CD4-positive, alpha-beta memory T cell (primary cell): ENCODE measurements at regions of chr15 and their contacts with region 1.

Region 1: GRCh38 chr15:44207643-44208042 is 12.6 kb upstream of the FRMD5 start:
- DNase-seq: no peak
- H3K4me3 ChIP-seq: no peak overlapping the region
- H3K4me3 Mint-ChIP-seq: no peak overlapping the region
- H3K27ac ChIP-seq: no peak overlapping the region
- H3K27ac Mint-ChIP-seq: no peak overlapping the region
- H3K4me1 ChIP-seq: no peaks in the 10 kb centered on the region
- H3K4me1 Mint-ChIP-seq: no peaks in the 10 kb centered on the region
- H3K27me3 ChIP-seq: peaks cover 4% of the 10 kb centered on the region
- H3K27me3 Mint-ChIP-seq: peaks cover 9 to 15% of the 10 kb centered on the region in 2 donors

Region 2: GRCh38 chr15:44144184-44144583 is 63.5 kb before region 1 on chr15:
- CTCF ChIA-PET with region 1: no interaction called
- POLR2A ChIA-PET with region 1: no interaction called
- intact Hi-C with region 1: loop called (anchors 10 kb)
- DNase-seq: no peak
- H3K4me3 ChIP-seq: no peak overlapping the region
- H3K4me3 Mint-ChIP-seq: no peak overlapping the region
- H3K27ac ChIP-seq: no peak overlapping the region
- H3K27ac Mint-ChIP-seq: no peak overlapping the region
- H3K4me1 ChIP-seq: no peaks in the 10 kb centered on the region
- H3K4me1 Mint-ChIP-seq: no peaks in the 10 kb centered on the region
- H3K27me3 ChIP-seq: no peaks in the 10 kb centered on the region
- H3K27me3 Mint-ChIP-seq: peaks cover 4 to 5% of the 10 kb centered on the region in 2 donors

Region 3: DNA sequence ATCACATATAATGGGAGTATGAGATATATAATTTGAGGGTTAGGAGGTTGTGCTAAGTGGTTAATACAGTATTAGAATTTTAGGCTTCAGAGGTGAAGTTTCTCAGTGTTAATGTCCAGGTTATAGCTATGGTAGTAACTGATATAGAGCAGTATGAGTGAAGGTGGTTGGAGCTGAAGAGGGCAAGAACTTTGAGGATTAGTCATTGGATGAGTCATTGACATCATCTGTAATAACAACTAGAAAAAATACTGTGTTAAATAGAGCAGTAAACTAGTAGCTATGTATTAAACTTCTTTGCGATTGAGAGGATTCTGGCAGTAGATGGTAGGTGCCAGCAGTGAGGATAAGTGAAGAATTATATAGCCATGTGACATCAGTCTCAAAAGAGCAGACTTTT is 281.8 kb after region 1 on chr15:
- CTCF ChIA-PET with region 1: no interaction called
- POLR2A ChIA-PET with region 1: no interaction called
- intact Hi-C with region 1: no loop called
- DNase-seq: no peak
- H3K4me3 ChIP-seq: no peak overlapping the region
- H3K4me3 Mint-ChIP-seq: no peak overlapping the region
- H3K27ac ChIP-seq: no peak overlapping the region
- H3K27ac Mint-ChIP-seq: peak overlapping the region in 6 of 7 donors; percentile 11 to 79 (median 25)
- H3K4me1 ChIP-seq: no peaks in the 10 kb centered on the region
- H3K4me1 Mint-ChIP-seq: peaks cover 8 to 15% (median 9%) of the 10 kb centered on the region in 4 donors
- H3K27me3 ChIP-seq: no peaks in the 10 kb centered on the region
- H3K27me3 Mint-ChIP-seq: no peaks in the 10 kb centered on the region

Region 4: DNA sequence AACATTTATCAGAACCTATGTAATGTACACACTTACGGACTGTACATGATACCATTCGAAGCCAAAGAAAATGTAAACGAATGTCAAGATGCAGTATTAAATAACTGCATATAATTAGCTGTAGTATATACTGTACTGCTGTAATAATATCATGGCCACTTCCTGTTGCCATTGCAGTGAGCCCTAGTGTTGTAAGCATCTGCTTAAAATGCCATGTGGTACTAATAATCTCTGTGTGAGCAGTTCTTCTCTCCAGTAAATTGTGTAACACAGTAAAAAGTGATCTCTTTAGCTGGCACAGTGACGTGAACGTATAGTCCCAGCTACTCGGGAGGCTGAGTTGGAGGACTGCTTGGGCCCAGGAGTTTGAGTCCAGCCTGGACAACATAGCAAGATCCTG is 447.2 kb after region 1 on chr15:
- CTCF ChIA-PET with region 1: no interaction called
- POLR2A ChIA-PET with region 1: no interaction called
- intact Hi-C with region 1: no loop called
- DNase-seq: no peak
- H3K4me3 ChIP-seq: no peak overlapping the region
- H3K4me3 Mint-ChIP-seq: no peak overlapping the region
- H3K27ac ChIP-seq: no peak overlapping the region
- H3K27ac Mint-ChIP-seq: no peak overlapping the region
- H3K4me1 ChIP-seq: no peaks in the 10 kb centered on the region
- H3K4me1 Mint-ChIP-seq: peaks cover 22 to 29% (median 25%) of the 10 kb centered on the region in 4 donors
- H3K27me3 ChIP-seq: no peaks in the 10 kb centered on the region
- H3K27me3 Mint-ChIP-seq: no peaks in the 10 kb centered on the region